ENCODE measurements at regions of chr11 and their contacts with region 1.

Region 1: GRCh38 chr11:122101625-122102291 is 14.3 kb downstream of the BLID start:
- DNase-seq: peak; percentile 61 to 84 (median 82)
- ATAC-seq: peak; percentile 86 to 91
- H3K4me3 ChIP-seq: peak overlapping the region; percentile 91
- H3K27ac ChIP-seq: peak overlapping the region; percentile 98
- H3K4me1 ChIP-seq: no peaks in the 10 kb centered on the region
- H3K27me3 ChIP-seq: no peaks in the 10 kb centered on the region

Region 2: GRCh38 chr11:121661880-121662486 is 439.8 kb before region 1 on chr11:
- intact Hi-C with region 1: loop called in 3 of 4 experiments (anchors 2 to 5 kb)
- DNase-seq: peak in 2 of 3 donors; percentile 38 to 44
- ATAC-seq: peak; percentile 69 to 80
- H3K4me3 ChIP-seq: no peak overlapping the region
- H3K27ac ChIP-seq: peak overlapping the region; percentile 20
- H3K4me1 ChIP-seq: no peaks in the 10 kb centered on the region
- H3K27me3 ChIP-seq: no peaks in the 10 kb centered on the region

Region 3: GRCh38 chr11:122007601-122008071 is 94.1 kb before region 1 on chr11:
- intact Hi-C with region 1: no loop called
- DNase-seq: peak; percentile 42 to 76 (median 67)
- ATAC-seq: peak; percentile 59 to 71
- H3K4me3 ChIP-seq: no peak overlapping the region
- H3K27ac ChIP-seq: no peak overlapping the region
- H3K4me1 ChIP-seq: no peaks in the 10 kb centered on the region
- H3K27me3 ChIP-seq: no peaks in the 10 kb centered on the region

Region 4: GRCh38 chr11:122038543-122038942 is 63.2 kb before region 1 on chr11:
- intact Hi-C with region 1: loop called in 1 of 4 experiments (anchors 10 kb)
- DNase-seq: no peak
- ATAC-seq: no peak
- H3K4me3 ChIP-seq: no peak overlapping the region
- H3K27ac ChIP-seq: no peak overlapping the region
- H3K4me1 ChIP-seq: no peaks in the 10 kb centered on the region
- H3K27me3 ChIP-seq: no peaks in the 10 kb centered on the region

Region 5: DNA sequence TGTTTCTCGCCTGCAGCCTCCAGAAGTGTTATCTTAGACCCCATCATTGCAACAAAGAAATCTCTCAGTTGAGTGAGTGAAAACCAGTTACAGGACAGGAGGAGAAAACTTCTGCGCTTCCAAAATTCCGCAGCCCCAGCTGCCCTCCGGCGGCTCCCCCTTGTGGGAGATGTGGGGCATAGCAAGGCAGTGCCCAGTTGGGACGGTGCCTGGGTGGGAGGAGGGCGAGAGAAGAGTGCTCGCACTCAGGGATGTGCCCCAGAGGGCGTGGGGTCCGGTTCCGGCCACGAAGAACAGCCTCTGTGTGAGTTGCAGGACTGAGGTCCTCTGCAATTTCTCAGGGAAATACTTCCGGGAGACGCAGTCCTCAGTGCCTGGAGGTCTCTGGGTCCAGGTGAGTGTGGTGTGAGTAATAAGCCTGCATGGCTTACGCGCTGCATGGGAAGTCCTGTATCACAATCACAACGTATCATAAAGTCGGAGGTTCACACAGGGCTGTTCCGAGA is 101.2 kb after region 1 on chr11:
- intact Hi-C with region 1: loop called (anchors 5 to 10 kb)
- DNase-seq: peak; percentile 64 to 87 (median 84)
- ATAC-seq: peak; percentile 82 to 85
- H3K4me3 ChIP-seq: peak overlapping the region; percentile 12
- H3K27ac ChIP-seq: peak overlapping the region; percentile 2
- H3K4me1 ChIP-seq: peaks cover 11% of the 10 kb centered on the region
- H3K27me3 ChIP-seq: no peaks in the 10 kb centered on the region

Region 6: GRCh38 chr11:122344274-122344673 is 242.5 kb after region 1 on chr11:
- intact Hi-C with region 1: no loop called
- DNase-seq: peak in 1 of 3 donors; percentile 59
- ATAC-seq: peak; percentile 77 to 79
- H3K4me3 ChIP-seq: no peak overlapping the region
- H3K27ac ChIP-seq: no peak overlapping the region
- H3K4me1 ChIP-seq: peaks cover 9% of the 10 kb centered on the region
- H3K27me3 ChIP-seq: no peaks in the 10 kb centered on the region

Measured in right cardiac atrium (tissue), 5 donors.